GM18951 (cell line): ENCODE measurements at regions of chr22 and their contacts with region 1.

Region 1: DNA sequence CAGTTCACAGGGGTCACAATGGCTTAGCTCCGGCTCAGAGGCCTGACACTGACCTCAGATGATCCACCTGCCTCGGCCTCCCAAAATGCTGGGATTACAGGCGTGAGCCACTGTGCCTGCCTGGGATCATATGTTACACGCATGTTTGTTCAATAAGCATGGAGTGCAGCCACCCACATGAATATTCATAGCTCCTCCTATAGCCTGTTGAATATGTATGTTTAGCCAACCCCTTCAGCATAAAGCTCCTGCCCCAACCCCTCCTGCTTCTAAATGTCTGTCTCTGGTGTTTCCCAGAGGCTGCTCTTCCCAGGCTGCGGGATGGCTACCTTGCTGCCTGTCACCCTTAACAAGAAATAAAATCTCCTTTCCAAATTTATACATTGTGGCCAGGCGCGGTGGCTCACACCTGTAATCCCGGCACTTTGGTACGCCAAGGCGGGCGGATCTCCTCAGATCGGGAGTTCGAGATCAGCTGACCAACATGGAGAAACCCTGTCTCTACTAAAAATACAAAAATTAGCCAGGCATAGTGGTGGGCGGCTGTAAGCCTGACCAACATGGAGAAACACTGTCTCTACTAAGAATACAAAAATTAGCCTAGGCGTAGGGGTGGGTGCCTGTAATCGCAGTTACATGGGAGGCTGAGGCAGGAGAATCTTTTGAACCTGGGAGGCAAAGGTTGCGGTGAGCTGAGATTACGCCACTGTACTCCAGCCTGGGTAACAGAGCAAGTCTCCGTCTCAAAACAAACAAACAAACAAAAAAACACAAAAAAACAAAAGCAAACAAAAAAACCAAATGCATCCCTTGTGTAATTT is 1.1 kb upstream of the APOBEC3F start:
- POLR2A ChIP-seq: no peak

Region 2: GRCh38 chr22:39078329-39078728 is 38.8 kb after region 1 on chr22:
- in situ Hi-C with region 1: loop called (anchors 5 kb)
- POLR2A ChIP-seq: no peak

Region 3: DNA sequence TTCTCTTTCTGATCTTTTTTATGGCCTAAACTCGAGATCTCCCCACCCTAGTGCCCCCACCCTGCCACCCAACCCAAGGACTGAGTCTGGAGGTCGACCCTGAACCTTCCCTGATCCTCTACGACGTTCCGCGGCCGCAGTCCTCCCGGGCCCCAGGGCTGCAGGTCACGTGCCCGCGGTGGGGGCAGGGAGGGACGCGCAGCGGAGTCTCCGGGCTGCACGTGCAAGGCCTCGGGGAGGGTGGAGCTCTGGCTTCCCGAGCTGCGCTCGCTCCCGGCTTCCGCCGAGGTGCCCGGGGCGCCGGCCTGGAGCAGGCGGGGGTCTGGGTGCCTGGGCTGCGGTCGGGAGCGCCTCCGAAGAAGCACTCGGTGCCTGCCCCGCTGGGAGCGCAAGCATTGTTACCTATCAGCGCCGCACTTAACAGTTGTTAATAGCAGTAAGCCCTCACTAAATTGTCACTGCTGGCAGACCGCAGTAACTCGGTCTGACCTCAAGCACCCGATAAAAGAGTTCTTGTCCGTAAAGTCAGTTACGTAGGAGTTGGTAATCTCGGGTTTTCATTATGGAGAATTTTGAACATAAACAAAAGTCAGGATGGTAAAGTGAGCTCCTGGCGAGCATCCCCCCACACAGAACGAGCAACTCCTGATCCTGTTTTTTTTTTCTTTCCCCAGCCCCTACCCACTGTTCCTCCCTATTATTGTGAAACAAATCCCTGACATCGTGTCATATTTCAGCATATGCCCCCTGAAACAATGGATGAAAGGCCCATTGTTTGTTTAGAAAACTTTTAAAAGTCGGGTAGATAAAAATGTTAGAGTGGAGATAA is 1983.2 kb after region 1 on chr22:
- in situ Hi-C with region 1: no loop called
- POLR2A ChIP-seq: peak; percentile 23